PC-3 (cell line): ENCODE measurements at regions of chr11 and their contacts with region 1.

Region 1: GRCh38 chr11:78961247-78961646 is 386.6 kb upstream of the NARS2 start:
- DNase-seq: peak; percentile 96
- ATAC-seq: peak; percentile 81
- H3K4me3 ChIP-seq: peak overlapping the region; percentile 68
- H3K27ac ChIP-seq: peak overlapping the region; percentile 94
- H3K4me1 ChIP-seq: peaks cover 65% of the 10 kb centered on the region
- H3K27me3 ChIP-seq: no peaks in the 10 kb centered on the region
- CTCF ChIP-seq: peak; percentile 99

Region 2: DNA sequence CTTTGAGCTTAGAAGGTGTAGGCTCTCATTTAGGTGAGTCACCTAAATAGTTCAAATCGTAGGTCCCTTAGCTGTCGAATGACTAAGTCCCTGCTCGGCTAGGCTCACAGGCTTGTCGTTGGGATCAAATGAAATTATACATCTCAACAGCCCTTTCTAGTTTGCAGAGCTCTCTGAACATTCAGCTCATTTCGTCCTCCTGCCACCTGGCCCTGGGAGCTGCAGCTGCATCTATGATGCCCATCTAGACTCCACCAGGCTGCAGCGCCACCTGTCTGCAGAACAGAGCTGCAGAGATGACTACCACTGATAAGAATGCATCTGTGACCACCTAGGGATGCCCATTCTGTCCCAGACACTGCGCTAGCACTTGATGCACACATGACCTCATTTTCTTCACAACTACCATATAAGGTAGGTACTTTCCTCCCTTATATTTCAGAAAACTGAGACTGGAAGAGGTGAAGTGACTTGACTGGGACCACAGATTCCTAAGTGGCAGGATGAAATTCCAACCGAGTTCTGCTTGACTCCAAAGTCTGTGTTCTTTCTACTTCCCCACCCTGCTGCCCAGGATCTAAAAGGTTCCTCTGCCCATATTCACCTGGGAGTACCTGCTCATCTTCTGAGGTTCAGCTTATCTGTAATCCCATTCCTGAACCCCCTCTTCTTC is 245.5 kb before region 1 on chr11:
- CTCF ChIA-PET with region 1: interaction called, 17 read pairs
- POLR2A ChIA-PET with region 1: interaction called, 5 read pairs
- intact Hi-C with region 1: loop called (anchors 1 kb)
- DNase-seq: peak; percentile 99
- ATAC-seq: peak; percentile 90
- H3K4me3 ChIP-seq: no peak overlapping the region
- H3K27ac ChIP-seq: peak overlapping the region; percentile 77
- H3K4me1 ChIP-seq: peaks cover 33% of the 10 kb centered on the region
- H3K27me3 ChIP-seq: no peaks in the 10 kb centered on the region
- CTCF ChIP-seq: peak; percentile 98

Region 3: DNA sequence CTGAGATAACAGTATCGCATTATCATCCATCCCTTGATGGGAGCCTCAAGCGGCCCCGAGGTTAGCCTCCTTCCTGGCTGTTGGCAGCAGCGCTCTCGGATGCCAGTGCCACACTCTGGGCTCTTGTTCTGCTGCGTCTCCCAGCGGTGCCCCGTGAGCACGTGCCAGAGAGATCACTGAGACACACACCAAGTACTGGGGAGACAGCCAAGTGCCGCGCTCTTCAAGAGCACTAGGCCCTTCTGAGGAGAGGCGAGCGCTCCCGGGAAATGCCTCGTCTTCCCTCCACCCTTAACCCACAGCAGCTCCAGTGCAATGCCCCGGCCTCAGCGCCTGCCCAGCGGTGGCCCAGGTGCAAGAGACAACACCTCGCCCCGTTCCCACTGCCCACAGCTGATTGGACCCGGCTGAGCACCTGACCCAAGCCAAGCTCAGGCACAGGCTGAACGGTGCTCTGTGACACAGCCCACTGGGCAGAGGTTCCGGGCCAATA is 138.3 kb before region 1 on chr11:
- CTCF ChIA-PET with region 1: interaction called, 3 read pairs
- POLR2A ChIA-PET with region 1: no interaction called
- intact Hi-C with region 1: loop called (anchors 1 kb)
- DNase-seq: no peak
- ATAC-seq: no peak
- H3K4me3 ChIP-seq: no peak overlapping the region
- H3K27ac ChIP-seq: peak overlapping the region; percentile 93
- H3K4me1 ChIP-seq: peaks cover 29% of the 10 kb centered on the region
- H3K27me3 ChIP-seq: no peaks in the 10 kb centered on the region
- CTCF ChIP-seq: no peak

Region 4: DNA sequence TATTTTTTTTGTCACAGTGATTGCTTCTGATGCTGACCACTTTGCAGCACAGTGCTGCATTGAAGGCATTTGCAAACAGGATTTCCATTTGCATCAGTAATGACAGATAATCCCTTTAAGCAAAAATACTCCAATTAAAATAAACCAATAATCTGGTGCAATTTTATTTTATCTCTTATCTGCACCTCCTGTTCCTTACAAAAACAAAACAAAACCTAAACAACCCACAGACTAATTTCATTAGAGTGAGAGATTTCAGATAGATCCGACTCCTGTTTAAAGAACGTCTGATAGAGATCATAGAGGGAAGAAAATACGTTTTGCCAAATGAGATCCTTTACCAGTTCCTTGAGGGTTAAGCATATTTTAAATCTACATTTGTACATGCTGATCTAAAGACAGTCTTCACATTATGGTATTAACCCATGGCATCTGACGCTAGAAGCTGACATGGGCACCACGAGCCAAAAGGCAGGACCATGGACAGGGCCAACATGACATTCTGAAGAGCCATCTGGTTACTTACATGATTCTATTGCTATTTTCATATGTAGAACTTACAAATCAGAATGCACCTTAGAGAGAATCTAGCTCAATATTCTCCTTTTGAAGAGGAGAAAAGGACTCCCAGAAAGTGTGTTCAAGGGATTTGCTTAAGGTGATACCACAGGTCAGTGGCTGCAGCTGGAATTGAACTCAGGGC is 100.4 kb before region 1 on chr11:
- CTCF ChIA-PET with region 1: no interaction called
- POLR2A ChIA-PET with region 1: no interaction called
- intact Hi-C with region 1: no loop called
- DNase-seq: peak; percentile 51
- ATAC-seq: no peak
- H3K4me3 ChIP-seq: no peak overlapping the region
- H3K27ac ChIP-seq: no peak overlapping the region
- H3K4me1 ChIP-seq: no peaks in the 10 kb centered on the region
- H3K27me3 ChIP-seq: no peaks in the 10 kb centered on the region
- CTCF ChIP-seq: no peak

Region 5: DNA sequence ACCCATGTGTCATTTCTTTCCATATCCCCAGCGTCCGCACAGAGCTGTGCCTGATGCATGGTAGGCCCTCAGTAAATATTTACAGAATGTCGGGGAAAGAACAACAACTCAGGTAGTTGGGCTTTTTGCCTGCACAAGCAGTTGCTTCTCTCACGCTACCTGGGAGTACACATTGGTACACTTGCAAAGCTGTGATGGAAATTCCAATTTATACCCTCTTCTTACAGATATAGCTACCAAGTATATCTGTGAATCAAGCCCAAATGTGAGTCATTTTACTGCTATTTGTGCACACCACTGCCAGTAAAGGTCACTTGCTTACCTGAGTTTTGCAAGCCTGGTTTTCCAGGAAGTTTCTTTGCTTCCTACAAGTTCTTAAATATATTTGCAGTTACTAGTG is 53.6 kb before region 1 on chr11:
- CTCF ChIA-PET with region 1: interaction called, 6 read pairs
- POLR2A ChIA-PET with region 1: no interaction called
- intact Hi-C with region 1: loop called (anchors 1 kb)
- DNase-seq: peak; percentile 98
- ATAC-seq: peak; percentile 85
- H3K4me3 ChIP-seq: peak overlapping the region; percentile 47
- H3K27ac ChIP-seq: peak overlapping the region; percentile 97
- H3K4me1 ChIP-seq: peaks cover 35% of the 10 kb centered on the region
- H3K27me3 ChIP-seq: no peaks in the 10 kb centered on the region
- CTCF ChIP-seq: no peak

Region 6: GRCh38 chr11:79069504-79069903 is 108.3 kb after region 1 on chr11:
- CTCF ChIA-PET with region 1: no interaction called
- POLR2A ChIA-PET with region 1: no interaction called
- intact Hi-C with region 1: no loop called
- DNase-seq: no peak
- ATAC-seq: no peak
- H3K4me3 ChIP-seq: no peak overlapping the region
- H3K27ac ChIP-seq: no peak overlapping the region
- H3K4me1 ChIP-seq: no peaks in the 10 kb centered on the region
- H3K27me3 ChIP-seq: no peaks in the 10 kb centered on the region
- CTCF ChIP-seq: no peak

Region 7: DNA sequence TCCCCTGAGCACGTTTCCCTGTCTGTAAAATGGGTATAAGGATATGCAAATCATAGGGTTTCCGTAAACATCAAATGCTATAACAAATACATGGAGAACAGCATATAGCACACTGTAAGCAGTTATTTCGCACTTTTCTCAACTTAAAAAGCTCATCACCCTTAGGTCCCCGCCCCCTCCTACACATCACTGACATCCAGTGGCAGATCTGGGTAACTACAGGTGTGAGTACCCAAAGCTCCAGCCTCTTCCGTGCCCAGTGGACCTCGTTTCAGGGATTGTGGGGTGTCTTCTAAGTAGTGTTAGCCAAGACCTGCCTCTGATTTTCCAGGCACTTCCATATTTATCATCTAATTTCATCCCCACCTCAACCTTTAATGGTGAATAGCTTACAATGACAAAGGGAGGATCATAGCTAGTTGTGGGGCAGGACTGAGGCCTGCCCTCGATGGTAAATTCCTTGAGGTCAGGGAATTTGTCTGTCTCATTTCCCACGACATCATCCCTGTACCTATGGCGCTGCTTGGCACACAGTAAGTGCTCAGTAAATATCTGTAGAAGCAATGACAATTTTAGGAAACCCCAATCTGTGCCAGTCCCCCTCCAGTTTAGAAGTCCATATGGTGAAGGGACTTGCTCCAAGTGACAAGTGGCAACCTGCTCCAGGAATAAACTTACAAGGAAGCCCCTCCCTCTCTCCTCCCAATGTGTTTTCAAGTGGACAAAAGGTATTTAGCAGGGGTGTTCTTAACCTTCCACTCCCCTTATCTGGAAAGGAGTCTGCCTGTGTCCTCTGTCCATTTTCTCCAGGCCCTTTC is 139.1 kb after region 1 on chr11:
- CTCF ChIA-PET with region 1: interaction called, 7 read pairs
- POLR2A ChIA-PET with region 1: no interaction called
- intact Hi-C with region 1: loop called (anchors 10 kb)
- DNase-seq: peak; percentile 80
- ATAC-seq: peak; percentile 92
- H3K4me3 ChIP-seq: no peak overlapping the region
- H3K27ac ChIP-seq: no peak overlapping the region
- H3K4me1 ChIP-seq: no peaks in the 10 kb centered on the region
- H3K27me3 ChIP-seq: no peaks in the 10 kb centered on the region
- CTCF ChIP-seq: peak; percentile 93